ENCODE measurements at regions of chr15 and their contacts with region 1.

Region 1: GRCh38 chr15:101652098-101652782 is at the start of gene TM2D3:
- DNase-seq: peak; percentile 95
- ATAC-seq: peak; percentile 95
- H3K4me3 Mint-ChIP-seq: peak within 1 kb of the TSS; percentile 93
- H3K27ac Mint-ChIP-seq: peak within 1 kb of the TSS; percentile 94
- H3K4me1 Mint-ChIP-seq: peaks cover 41% of the 10 kb centered on the region
- H3K27me3 Mint-ChIP-seq: no peaks in the 10 kb centered on the region
- total RNA-seq, gene TM2D3: 36.8 to 38.8 TPM

Region 2: DNA sequence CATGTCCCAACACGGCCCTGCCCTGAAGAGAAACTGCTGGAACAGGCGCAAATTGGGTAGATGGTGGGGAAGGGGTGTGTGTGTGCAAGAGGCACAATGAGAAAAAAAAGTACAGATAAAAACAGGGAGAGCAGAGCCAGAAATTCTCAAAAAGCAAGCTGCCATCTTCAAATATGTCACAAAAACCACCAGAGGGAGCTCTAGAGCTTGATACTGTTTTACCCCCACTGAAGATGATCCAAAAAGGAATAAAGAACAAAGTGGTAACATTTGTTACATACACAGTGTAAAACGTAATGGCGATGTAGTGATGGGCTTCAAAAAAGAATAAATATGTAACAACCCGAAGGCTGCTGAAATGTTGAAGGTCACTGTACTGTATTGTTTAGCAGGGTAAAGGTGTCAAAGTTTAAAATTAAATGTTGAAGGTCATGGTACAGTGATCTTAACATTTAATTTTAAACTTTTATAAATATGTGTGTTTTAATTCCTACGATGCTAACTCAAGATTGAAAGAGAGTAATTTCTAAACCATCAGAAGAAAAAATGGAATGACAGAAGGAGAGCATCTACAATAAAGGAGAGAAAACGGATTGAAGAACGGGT is 363.2 kb before region 1 on chr15:
- CTCF ChIA-PET with region 1: interaction called, 12 read pairs
- POLR2A ChIA-PET with region 1: interaction called, 18 read pairs
- DNase-seq: peak; percentile 51
- ATAC-seq: peak; percentile 54
- H3K4me3 Mint-ChIP-seq: no peak overlapping the region
- H3K27ac Mint-ChIP-seq: peak overlapping the region; percentile 52
- H3K4me1 Mint-ChIP-seq: peaks cover 55% of the 10 kb centered on the region
- H3K27me3 Mint-ChIP-seq: no peaks in the 10 kb centered on the region

Region 3: DNA sequence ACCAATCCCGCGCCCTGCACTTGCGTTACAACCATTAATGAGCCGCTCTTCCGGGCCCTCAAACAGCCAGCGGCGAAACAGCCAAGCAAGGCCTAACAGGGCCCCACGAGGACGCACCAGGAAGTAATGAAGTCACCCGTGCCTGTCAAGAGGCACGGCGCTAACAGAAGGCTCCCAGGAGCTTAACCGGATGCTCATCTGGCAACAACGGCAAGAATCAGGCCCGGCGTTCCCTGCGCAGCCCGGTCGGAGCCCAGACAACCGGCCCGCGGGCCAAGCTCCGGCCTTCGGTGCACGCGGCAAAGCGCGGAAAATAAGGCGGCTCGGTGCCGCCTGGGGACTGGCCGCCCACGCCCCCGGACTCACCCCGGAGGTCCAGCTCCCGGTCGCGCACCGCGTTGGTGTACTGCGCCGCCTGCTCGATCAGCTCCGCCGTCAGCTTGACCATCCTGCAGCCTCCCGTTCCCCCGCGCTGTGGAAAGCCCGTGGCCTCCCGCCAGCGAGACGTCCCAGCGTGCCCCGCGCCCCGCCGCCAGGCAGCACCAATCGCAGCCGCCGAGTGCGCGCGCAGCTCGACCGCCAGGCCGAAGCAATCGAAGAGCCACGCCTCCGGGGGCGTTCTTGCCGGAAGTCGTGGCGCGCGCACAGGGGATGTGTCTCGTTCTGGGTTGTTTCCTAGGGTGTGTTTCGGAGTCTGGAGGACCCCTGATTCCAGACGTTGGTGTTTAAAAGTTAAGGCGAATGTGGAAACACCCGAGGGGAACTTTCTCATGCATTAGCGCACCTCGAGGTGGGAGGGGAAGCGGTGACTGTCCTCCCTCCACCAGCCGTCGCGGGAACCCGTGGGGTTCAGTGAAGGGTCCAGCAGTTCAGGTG is 357.3 kb before region 1 on chr15 and contains the start of gene SNRPA1:
- CTCF ChIA-PET with region 1: interaction called, 12 read pairs
- POLR2A ChIA-PET with region 1: interaction called, 18 read pairs
- DNase-seq: peak; percentile 97
- ATAC-seq: peak; percentile 87
- H3K4me3 Mint-ChIP-seq: peak within 1 kb of the TSS; percentile 98
- H3K27ac Mint-ChIP-seq: peak within 1 kb of the TSS; percentile 93
- H3K4me1 Mint-ChIP-seq: peaks cover 37% of the 10 kb centered on the region
- H3K27me3 Mint-ChIP-seq: no peaks in the 10 kb centered on the region
- total RNA-seq, gene SNRPA1: 138 to 144 TPM

Region 4: GRCh38 chr15:101547737-101548136 is 104.5 kb before region 1 on chr15:
- CTCF ChIA-PET with region 1: no interaction called
- POLR2A ChIA-PET with region 1: no interaction called
- DNase-seq: no peak
- ATAC-seq: no peak
- H3K4me3 Mint-ChIP-seq: no peak overlapping the region
- H3K27ac Mint-ChIP-seq: no peak overlapping the region
- H3K4me1 Mint-ChIP-seq: no peaks in the 10 kb centered on the region
- H3K27me3 Mint-ChIP-seq: peaks cover 14% of the 10 kb centered on the region

Region 5: GRCh38 chr15:101558221-101558933 is 93.9 kb before region 1 on chr15:
- CTCF ChIA-PET with region 1: no interaction called
- POLR2A ChIA-PET with region 1: no interaction called
- DNase-seq: no peak
- ATAC-seq: no peak
- H3K4me3 Mint-ChIP-seq: no peak overlapping the region
- H3K27ac Mint-ChIP-seq: no peak overlapping the region
- H3K4me1 Mint-ChIP-seq: no peaks in the 10 kb centered on the region
- H3K27me3 Mint-ChIP-seq: peaks cover 2% of the 10 kb centered on the region